ENCODE measurements at regions of chr7 and their contacts with region 1.

Region 1: DNA sequence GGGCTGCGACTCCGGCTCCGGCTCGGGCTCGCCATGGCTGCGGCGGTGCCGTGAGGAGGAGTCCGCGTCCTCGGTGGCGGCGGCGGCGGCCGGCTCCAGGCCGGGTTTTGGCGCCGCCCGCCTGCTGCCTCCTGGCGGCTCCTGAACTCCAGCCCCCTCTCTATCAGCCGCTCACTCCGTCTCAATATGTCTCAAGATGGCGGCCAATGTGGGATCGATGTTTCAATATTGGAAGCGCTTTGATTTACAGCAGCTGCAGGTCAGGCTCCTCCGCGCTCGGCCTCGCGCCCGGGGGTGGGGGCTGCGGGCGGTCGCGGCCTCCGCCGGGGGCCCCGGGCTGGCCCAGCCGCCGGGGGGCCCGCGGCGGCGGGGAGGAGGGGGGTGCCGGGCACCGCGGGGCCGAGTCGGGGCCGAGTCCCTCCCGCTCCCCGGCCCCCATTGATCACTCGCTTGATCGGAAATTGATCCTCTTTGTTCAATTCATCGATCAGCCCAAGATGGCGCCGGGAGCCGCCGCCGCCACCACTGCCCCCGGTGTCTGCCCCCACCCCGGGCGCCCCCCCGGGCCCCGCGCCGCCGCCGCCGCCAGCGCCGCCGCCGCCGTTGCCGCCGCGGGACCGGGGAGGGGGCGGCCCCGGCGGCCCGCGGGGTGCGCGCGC is 1.5 kb upstream of the CUX1 start:
- DNase-seq: peak; percentile 71
- H3K4me3 Mint-ChIP-seq: peak overlapping the region; percentile 70
- H3K27ac Mint-ChIP-seq: peak overlapping the region; percentile 69
- H3K4me1 Mint-ChIP-seq: peaks cover 16% of the 10 kb centered on the region
- H3K27me3 Mint-ChIP-seq: no peaks in the 10 kb centered on the region

Region 2: GRCh38 chr7:101602484-101603241 is 213.3 kb before region 1 on chr7:
- CTCF ChIA-PET with region 1: no interaction called
- intact Hi-C with region 1: loop called (anchors 1 kb)
- DNase-seq: peak; percentile 86
- H3K4me3 Mint-ChIP-seq: no peak overlapping the region
- H3K27ac Mint-ChIP-seq: no peak overlapping the region
- H3K4me1 Mint-ChIP-seq: no peaks in the 10 kb centered on the region
- H3K27me3 Mint-ChIP-seq: no peaks in the 10 kb centered on the region

Region 3: DNA sequence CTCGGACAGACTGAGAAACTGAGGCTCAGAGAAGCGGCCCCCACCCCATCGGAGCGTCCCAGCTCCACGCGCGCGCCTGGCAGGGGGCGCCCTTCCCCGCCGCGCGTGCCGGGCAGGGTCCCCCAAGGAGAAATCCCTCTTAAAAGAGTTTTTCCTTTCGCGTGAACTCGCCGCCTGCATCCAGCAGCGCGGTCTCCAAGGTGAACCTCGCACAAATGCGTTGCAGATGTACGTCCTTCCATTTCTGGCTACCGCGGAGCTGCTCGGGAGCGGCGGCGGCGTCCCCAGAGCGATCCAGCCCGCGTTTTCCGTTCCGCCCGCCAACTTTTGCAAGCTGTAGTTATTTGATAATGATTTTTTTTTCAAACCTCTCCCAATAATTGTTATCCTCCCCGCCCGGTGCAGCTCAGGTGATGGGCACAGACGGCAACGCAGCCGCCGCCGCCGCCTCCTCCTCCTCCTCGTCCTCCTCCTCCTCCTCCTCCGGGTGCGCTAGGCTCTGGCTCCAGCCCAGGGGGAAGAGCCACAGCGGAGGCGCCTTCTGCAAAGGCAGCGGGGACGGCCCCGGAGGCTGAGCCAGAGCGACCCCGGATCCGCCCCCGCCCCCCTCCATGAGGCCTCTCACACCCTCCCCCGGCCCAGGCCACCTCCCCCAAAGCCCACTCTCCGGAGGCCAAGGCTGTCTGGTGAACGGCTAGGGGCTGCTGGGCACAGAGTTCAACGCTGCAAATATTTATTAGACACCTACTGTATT is 72.5 kb before region 1 on chr7:
- CTCF ChIA-PET with region 1: interaction called, 4 read pairs
- intact Hi-C with region 1: loop called (anchors 1 kb)
- DNase-seq: peak; percentile 63
- H3K4me3 Mint-ChIP-seq: peak overlapping the region; percentile 75
- H3K27ac Mint-ChIP-seq: no peak overlapping the region
- H3K4me1 Mint-ChIP-seq: peaks cover 13% of the 10 kb centered on the region
- H3K27me3 Mint-ChIP-seq: no peaks in the 10 kb centered on the region

Region 4: DNA sequence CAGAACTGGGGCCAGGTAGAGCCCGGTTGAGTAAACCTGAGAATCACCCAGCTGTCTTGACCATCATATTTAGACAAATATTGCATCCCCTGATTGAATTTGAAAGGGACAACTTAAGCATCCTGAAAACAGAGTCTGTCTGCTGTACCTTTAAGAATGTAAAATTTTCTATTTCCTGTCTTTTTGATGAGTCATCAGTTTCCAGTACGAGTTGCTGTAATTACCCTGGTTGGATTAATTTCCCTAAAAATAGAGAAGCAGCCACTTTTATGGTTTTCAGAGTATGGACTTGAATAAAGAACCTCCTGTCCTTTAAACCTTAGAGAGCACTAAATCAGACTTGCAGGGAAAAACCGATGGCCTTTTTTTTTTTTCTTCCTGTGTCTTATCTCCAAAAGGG is 306.1 kb after region 1 on chr7:
- CTCF ChIA-PET with region 1: no interaction called
- intact Hi-C with region 1: loop called (anchors 2 kb)
- DNase-seq: no peak
- H3K4me3 Mint-ChIP-seq: no peak overlapping the region
- H3K27ac Mint-ChIP-seq: peak overlapping the region; percentile 50
- H3K4me1 Mint-ChIP-seq: peaks cover 13% of the 10 kb centered on the region
- H3K27me3 Mint-ChIP-seq: no peaks in the 10 kb centered on the region

Region 5: GRCh38 chr7:102272075-102272917 is 456.3 kb after region 1 on chr7:
- CTCF ChIA-PET with region 1: no interaction called
- intact Hi-C with region 1: loop called (anchors 2 kb)
- DNase-seq: peak; percentile 83
- H3K4me3 Mint-ChIP-seq: no peak overlapping the region
- H3K27ac Mint-ChIP-seq: no peak overlapping the region
- H3K4me1 Mint-ChIP-seq: peaks cover 3% of the 10 kb centered on the region
- H3K27me3 Mint-ChIP-seq: no peaks in the 10 kb centered on the region